CD4-positive, alpha-beta memory T cell (primary cell): ENCODE measurements at regions of chr10 and their contacts with region 1.

Region 1: DNA sequence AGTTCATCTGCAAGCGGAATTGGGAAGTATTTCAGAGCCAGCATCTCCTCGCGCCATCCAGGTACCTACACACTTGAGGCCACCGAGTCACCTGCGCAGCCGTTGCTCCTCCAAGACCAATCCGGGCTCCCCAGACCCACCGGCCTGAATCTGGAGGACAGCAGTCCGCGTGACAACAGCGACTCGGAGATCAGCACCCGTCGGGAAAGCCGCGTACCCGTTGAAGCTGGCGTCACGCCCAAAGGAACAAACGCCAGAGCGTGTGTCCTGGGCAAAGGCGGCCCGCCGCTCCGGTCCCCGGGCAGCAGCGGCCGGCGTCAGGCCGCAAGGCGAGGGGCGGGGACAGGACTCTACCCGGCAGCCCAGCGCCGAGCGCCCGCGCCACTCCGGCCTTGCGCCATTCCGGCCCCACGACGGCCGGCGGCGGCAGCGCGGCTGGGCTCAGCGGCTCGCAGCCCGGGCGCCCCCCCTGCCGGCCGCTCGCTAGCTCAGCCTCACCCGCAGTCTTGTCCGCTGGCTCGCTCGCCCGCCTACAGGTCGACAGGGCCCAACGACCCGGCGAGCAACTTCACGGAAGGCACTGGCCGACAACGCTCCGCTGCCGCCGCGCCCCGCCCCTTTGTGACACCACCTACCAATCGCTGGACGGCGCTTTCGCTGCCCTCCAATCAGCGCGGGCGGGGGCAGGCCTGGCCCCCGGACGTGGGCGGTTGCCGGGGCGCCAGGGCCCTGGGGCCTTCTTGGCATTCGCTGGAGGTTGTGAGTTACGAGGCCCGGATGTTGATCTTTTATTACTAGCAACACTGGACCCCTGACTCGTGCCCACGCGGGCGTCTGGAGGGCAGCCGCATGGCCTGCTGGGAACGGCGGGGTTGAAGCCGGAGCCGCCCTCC is at the start of gene ZFAND4:
- DNase-seq: peak; percentile 92 to 94 (median 93)
- H3K4me3 ChIP-seq: peak within 1 kb of the TSS; percentile 67 to 68
- H3K4me3 Mint-ChIP-seq: peak within 1 kb of the TSS; percentile 90 to 97 (median 94)
- H3K27ac ChIP-seq: peak within 1 kb of the TSS; percentile 68
- H3K27ac Mint-ChIP-seq: peak within 1 kb of the TSS; percentile 82 to 96 (median 92)
- H3K4me1 ChIP-seq: peaks cover 12% of the 10 kb centered on the region
- H3K4me1 Mint-ChIP-seq: peaks cover 31 to 53% (median 43%) of the 10 kb centered on the region in 4 donors
- H3K27me3 ChIP-seq: no peaks in the 10 kb centered on the region
- H3K27me3 Mint-ChIP-seq: no peaks in the 10 kb centered on the region
- total RNA-seq, gene ZFAND4: 25.1 to 28.1 TPM

Region 2: GRCh38 chr10:45249978-45250693 is 422.3 kb before region 1 on chr10:
- CTCF ChIA-PET with region 1: interaction called, 4 read pairs
- POLR2A ChIA-PET with region 1: interaction called, 4 read pairs
- intact Hi-C with region 1: loop called (anchors 1 kb)
- DNase-seq: peak in 4 of 5 donors; percentile 55 to 65 (median 58)
- H3K4me3 ChIP-seq: no peak overlapping the region
- H3K4me3 Mint-ChIP-seq: peak overlapping the region in 4 of 8 donors; percentile 6 to 58 (median 36)
- H3K27ac ChIP-seq: no peak overlapping the region
- H3K27ac Mint-ChIP-seq: peak overlapping the region in 1 of 7 donors; percentile 6
- H3K4me1 ChIP-seq: no peaks in the 10 kb centered on the region
- H3K4me1 Mint-ChIP-seq: peaks cover 4 to 9% (median 7%) of the 10 kb centered on the region in 4 donors
- H3K27me3 ChIP-seq: no peaks in the 10 kb centered on the region
- H3K27me3 Mint-ChIP-seq: peaks cover 2% of the 10 kb centered on the region in 2 donors

Region 3: GRCh38 chr10:45420453-45421192 is 251.8 kb before region 1 on chr10:
- CTCF ChIA-PET with region 1: no interaction called
- POLR2A ChIA-PET with region 1: interaction called, 6 read pairs
- intact Hi-C with region 1: loop called (anchors 2 kb)
- DNase-seq: peak; percentile 48 to 79 (median 54)
- H3K4me3 ChIP-seq: peak overlapping the region; percentile 32 to 39
- H3K4me3 Mint-ChIP-seq: peak overlapping the region; percentile 89 to 95 (median 92)
- H3K27ac ChIP-seq: peak overlapping the region; percentile 82
- H3K27ac Mint-ChIP-seq: peak overlapping the region; percentile 89 to 97 (median 97)
- H3K4me1 ChIP-seq: peaks cover 72% of the 10 kb centered on the region
- H3K4me1 Mint-ChIP-seq: peaks cover 41 to 82% (median 63%) of the 10 kb centered on the region in 4 donors
- H3K27me3 ChIP-seq: no peaks in the 10 kb centered on the region
- H3K27me3 Mint-ChIP-seq: no peaks in the 10 kb centered on the region

Region 4: GRCh38 chr10:45464958-45465567 is 207.4 kb before region 1 on chr10:
- CTCF ChIA-PET with region 1: interaction called, 20 read pairs
- POLR2A ChIA-PET with region 1: interaction called, 4 read pairs
- intact Hi-C with region 1: loop called (anchors 2 kb)
- DNase-seq: peak; percentile 67 to 73 (median 70)
- H3K4me3 ChIP-seq: no peak overlapping the region
- H3K4me3 Mint-ChIP-seq: no peak overlapping the region
- H3K27ac ChIP-seq: no peak overlapping the region
- H3K27ac Mint-ChIP-seq: peak overlapping the region in 6 of 7 donors; percentile 5 to 83 (median 45)
- H3K4me1 ChIP-seq: peaks cover 8% of the 10 kb centered on the region
- H3K4me1 Mint-ChIP-seq: peaks cover 14 to 39% (median 21%) of the 10 kb centered on the region in 4 donors
- H3K27me3 ChIP-seq: no peaks in the 10 kb centered on the region
- H3K27me3 Mint-ChIP-seq: no peaks in the 10 kb centered on the region

Region 5: DNA sequence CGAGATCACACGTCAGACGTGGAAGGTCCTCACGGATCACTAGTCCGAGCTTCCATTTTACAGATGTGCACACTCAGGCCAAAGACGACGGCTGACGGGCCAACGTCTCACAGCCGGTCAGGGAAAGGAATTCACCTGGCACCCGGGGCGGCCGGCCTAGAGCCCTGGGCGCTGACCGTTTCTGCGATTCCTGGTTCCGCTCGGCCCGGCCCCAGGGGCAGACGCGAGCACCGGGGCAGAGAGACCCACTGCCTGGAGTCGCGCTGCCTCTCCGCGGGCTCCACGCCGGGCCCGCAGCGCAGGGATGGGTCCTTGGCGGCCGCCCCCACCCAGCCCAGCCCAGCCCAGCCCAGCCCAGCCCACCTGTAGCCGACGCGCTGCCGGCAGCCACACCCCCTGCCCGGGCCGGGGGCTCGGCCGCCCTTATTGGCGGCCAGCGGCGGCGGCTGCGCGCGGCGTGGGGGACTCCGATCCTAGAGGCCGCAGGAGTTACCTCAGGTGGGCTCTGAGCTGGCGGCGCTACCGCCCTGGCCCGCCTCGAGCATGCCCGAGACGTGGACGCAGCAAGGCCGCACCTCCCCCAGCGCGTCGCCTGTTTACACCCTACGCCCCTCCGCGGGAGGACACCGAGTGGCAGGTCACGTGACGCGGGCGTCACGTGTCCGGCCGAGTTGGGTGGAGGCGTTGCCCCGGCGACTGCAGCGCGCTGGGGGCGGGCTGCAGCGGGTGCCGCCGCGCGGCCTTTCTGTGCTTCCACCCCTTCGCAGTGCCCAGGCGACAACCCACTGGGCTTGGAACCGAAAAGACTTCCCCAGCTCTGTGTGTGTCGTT is 77.9 kb before region 1 on chr10:
- CTCF ChIA-PET with region 1: interaction called, 4 read pairs
- POLR2A ChIA-PET with region 1: interaction called, 5 read pairs
- intact Hi-C with region 1: loop called (anchors 2 kb)
- DNase-seq: peak; percentile 88 to 91 (median 89)
- H3K4me3 ChIP-seq: peak overlapping the region; percentile 62 to 84
- H3K4me3 Mint-ChIP-seq: peak overlapping the region; percentile 90 to 97 (median 96)
- H3K27ac ChIP-seq: peak overlapping the region; percentile 66
- H3K27ac Mint-ChIP-seq: peak overlapping the region; percentile 87 to 98 (median 96)
- H3K4me1 ChIP-seq: peaks cover 33% of the 10 kb centered on the region
- H3K4me1 Mint-ChIP-seq: peaks cover 25 to 58% (median 36%) of the 10 kb centered on the region in 4 donors
- H3K27me3 ChIP-seq: no peaks in the 10 kb centered on the region
- H3K27me3 Mint-ChIP-seq: peaks cover 4 to 5% of the 10 kb centered on the region in 2 donors

Region 6: DNA sequence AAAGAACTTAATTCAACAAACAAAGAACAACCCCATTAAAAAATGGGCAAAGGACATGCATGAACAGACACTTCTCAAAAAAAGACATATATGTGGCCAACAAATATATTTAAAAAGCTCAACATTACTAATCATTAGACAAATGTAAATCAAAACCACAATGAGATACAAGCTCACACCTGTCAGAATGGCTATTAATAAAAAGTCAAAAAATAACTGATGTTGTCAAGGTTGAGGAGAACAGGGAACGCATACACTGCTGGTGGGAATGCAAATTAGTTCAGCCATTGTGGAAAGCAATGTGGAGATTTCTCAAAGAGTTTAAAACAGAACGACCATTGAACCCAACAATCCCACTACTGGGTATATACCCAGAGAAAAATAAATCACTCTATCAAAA is 19.0 kb before region 1 on chr10:
- CTCF ChIA-PET with region 1: no interaction called
- POLR2A ChIA-PET with region 1: no interaction called
- intact Hi-C with region 1: no loop called
- DNase-seq: no peak
- H3K4me3 ChIP-seq: no peak overlapping the region
- H3K4me3 Mint-ChIP-seq: no peak overlapping the region
- H3K27ac ChIP-seq: no peak overlapping the region
- H3K27ac Mint-ChIP-seq: no peak overlapping the region
- H3K4me1 ChIP-seq: peaks cover 4% of the 10 kb centered on the region
- H3K4me1 Mint-ChIP-seq: peaks cover 24 to 40% (median 36%) of the 10 kb centered on the region in 4 donors
- H3K27me3 ChIP-seq: no peaks in the 10 kb centered on the region
- H3K27me3 Mint-ChIP-seq: no peaks in the 10 kb centered on the region

Region 7: GRCh38 chr10:46022978-46023702 is 350.7 kb after region 1 on chr10:
- CTCF ChIA-PET with region 1: no interaction called
- POLR2A ChIA-PET with region 1: no interaction called
- intact Hi-C with region 1: loop called (anchors 10 kb)
- DNase-seq: peak; percentile 74 to 88 (median 76)
- H3K4me3 ChIP-seq: peak overlapping the region in 1 of 2 donors; percentile 49
- H3K4me3 Mint-ChIP-seq: peak overlapping the region; percentile 83 to 91 (median 86)
- H3K27ac ChIP-seq: peak overlapping the region; percentile 59
- H3K27ac Mint-ChIP-seq: peak overlapping the region; percentile 74 to 92 (median 81)
- H3K4me1 ChIP-seq: peaks cover 93% of the 10 kb centered on the region
- H3K4me1 Mint-ChIP-seq: peaks cover 60 to 97% (median 79%) of the 10 kb centered on the region in 4 donors
- H3K27me3 ChIP-seq: no peaks in the 10 kb centered on the region
- H3K27me3 Mint-ChIP-seq: no peaks in the 10 kb centered on the region

Region 8: DNA sequence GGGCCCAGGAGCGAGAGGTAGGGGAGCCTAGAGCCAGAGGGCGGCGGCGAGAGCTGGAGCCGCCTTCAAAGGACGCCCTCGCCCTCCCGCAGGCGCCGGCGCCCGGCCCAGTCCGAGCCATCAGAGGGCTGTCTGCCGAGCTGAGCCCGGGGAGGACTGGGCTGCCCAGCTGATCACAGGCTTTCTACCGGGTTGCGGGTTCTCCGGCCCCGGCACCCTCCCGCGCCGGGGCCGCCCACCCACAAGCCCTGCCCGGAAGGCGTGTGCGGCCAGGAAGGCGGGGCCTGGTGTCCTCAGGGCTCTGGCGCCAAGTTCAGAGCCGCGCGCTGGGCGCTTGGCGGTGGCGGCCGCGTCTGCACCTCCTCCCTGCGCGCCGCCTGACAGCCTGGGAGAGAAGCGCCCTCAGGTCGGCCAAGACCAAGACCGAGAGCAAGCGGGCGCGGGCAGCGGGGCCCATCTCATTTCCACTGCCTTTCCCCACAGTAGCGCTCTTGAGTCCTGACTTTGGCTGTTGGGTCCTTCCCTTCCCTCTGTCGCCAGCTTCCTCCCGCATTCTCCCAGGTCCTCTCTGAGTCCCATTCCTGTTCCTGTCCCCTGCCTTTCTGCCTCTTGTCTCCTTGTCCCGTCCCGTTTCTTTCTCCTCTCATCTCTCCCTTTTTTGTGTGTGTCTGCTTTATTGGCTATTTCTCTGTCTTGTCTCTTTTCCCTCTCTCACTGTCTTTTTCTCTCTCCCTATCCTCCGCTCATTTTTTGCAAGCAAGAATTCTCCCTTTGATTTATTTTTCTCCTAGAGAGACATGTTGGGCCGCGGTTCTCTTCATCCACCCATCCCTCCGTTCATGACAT is 434.2 kb after region 1 on chr10:
- CTCF ChIA-PET with region 1: no interaction called
- POLR2A ChIA-PET with region 1: no interaction called
- intact Hi-C with region 1: no loop called
- DNase-seq: peak in 4 of 5 donors; percentile 43 to 60 (median 48)
- H3K4me3 ChIP-seq: peak overlapping the region in 1 of 2 donors; percentile 30
- H3K4me3 Mint-ChIP-seq: peak overlapping the region; percentile 78 to 97 (median 92)
- H3K27ac ChIP-seq: peak overlapping the region; percentile 60
- H3K27ac Mint-ChIP-seq: peak overlapping the region in 6 of 7 donors; percentile 9 to 87 (median 51)
- H3K4me1 ChIP-seq: peaks cover 13% of the 10 kb centered on the region
- H3K4me1 Mint-ChIP-seq: peaks cover 13 to 21% (median 15%) of the 10 kb centered on the region in 4 donors
- H3K27me3 ChIP-seq: no peaks in the 10 kb centered on the region
- H3K27me3 Mint-ChIP-seq: peaks cover 2 to 3% of the 10 kb centered on the region in 2 donors